Prostate gland (tissue), 2 donors: ENCODE measurements at regions of chr11 and their contacts with region 1.

Region 1: GRCh38 chr11:27698872-27699474 is 1.3 kb downstream of the BDNF start:
- DNase-seq: peak; percentile 60
- H3K4me3 ChIP-seq: peak overlapping the region; percentile 37 to 41
- H3K27ac ChIP-seq: no peak overlapping the region
- H3K4me1 ChIP-seq: peaks cover 7% of the 10 kb centered on the region
- H3K27me3 ChIP-seq: peaks cover 5% of the 10 kb centered on the region
- CTCF ChIP-seq: peak; percentile 47 to 72 (median 52)
- POLR2A ChIP-seq: no peak

Region 2: DNA sequence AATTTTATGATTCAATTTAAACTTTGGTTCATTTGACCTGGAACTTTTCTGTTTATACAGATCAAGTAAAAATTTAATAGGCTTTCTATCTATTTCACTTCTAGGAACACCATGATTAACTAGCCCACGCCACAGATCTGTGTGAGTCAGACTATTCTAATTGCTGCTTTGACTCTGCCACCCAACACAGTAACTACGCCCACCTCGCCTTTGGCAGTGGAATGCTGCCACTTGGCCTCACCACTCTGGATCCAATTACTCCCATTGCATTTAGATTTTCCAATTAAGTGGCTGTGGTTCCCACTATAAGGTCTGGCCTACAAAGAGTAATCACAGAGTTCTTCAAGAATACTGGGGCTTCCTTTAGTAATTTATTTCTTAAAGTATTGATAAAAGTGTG is 145.8 kb before region 1 on chr11:
- intact Hi-C with region 1: no loop called
- DNase-seq: no peak
- H3K4me3 ChIP-seq: no peak overlapping the region
- H3K27ac ChIP-seq: no peak overlapping the region
- H3K4me1 ChIP-seq: no peaks in the 10 kb centered on the region
- H3K27me3 ChIP-seq: no peaks in the 10 kb centered on the region
- CTCF ChIP-seq: no peak
- POLR2A ChIP-seq: no peak

Region 3: DNA sequence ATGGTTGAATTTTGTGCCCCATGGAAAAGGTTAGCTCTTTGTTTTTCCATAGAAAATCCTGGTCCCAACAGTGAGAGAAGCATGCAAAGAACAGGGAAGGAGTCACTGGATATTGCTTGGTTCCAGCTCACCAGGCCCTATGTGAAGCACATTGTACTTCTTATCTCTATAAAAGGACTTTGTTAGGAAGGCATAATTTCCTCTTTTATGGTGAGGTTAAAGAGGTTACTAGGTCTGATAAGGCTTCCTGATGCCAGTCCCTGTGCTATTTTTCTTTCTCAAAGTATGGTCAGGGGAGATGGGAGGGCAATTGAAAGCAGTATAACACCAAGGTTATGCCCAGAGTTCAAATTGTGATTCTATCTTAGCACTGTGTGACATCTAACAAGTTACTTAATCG is 246.4 kb after region 1 on chr11:
- intact Hi-C with region 1: no loop called
- DNase-seq: no peak
- H3K4me3 ChIP-seq: no peak overlapping the region
- H3K27ac ChIP-seq: no peak overlapping the region
- H3K4me1 ChIP-seq: no peaks in the 10 kb centered on the region
- H3K27me3 ChIP-seq: no peaks in the 10 kb centered on the region
- CTCF ChIP-seq: no peak
- POLR2A ChIP-seq: no peak

Region 4: DNA sequence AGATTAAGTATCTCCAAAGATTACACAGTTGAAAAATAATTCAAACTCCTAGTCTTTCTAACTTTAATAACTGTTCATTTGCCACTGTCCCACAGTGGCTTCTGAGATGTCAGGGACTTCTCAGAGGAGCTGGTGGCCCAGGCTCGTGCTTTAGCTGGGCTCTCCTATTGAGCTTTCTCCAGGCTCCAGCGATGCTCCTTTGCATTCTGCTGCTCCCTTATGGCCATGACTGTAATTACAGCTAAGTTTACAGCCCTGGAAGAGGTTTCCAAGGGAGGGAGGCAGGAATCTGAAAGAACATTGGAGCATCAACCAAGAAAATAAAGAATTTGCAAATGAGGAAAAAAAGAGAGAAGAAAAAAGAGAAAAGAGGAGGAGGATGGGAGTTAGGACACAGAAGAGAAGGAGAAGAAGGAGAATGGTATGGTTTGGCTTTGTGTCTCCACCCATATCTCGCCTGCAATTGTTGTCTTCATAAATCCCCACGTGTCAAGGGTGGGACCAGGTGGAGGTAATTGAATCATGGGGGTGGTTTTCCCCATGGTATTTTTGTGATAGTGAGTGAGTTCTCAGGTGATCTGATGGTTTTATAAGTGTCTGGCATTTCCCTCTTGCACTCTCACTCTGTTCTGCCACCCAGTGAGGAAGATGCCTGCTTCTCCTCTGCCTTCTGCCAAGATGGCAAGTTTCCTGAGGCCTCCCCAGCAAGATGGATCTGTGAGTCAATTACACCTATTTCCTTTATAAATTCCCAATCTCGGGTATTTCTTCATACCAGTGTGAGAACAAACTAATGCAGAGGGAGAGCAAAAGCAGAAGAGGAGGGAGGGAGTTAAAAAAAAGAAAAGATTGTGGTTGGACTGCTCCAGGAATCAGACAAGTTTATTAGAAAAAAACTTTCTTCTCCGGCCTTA is 1460.8 kb after region 1 on chr11:
- intact Hi-C with region 1: loop called (anchors 5 kb)
- DNase-seq: peak; percentile 11
- H3K4me3 ChIP-seq: no peak overlapping the region
- H3K27ac ChIP-seq: no peak overlapping the region
- H3K4me1 ChIP-seq: no peaks in the 10 kb centered on the region
- H3K27me3 ChIP-seq: no peaks in the 10 kb centered on the region
- CTCF ChIP-seq: peak in 3 of 4 experiments; percentile 14 to 61 (median 48)
- POLR2A ChIP-seq: no peak

Region 5: GRCh38 chr11:29333993-29334775 is 1635.2 kb after region 1 on chr11:
- intact Hi-C with region 1: loop called (anchors 5 kb)
- DNase-seq: no peak
- H3K4me3 ChIP-seq: no peak overlapping the region
- H3K27ac ChIP-seq: no peak overlapping the region
- H3K4me1 ChIP-seq: no peaks in the 10 kb centered on the region
- H3K27me3 ChIP-seq: no peaks in the 10 kb centered on the region
- CTCF ChIP-seq: peak in 2 of 4 experiments; percentile 9 to 26
- POLR2A ChIP-seq: no peak